HEK293T (cell line): ENCODE measurements at regions of chr7 and their contacts with region 1.

Region 1: GRCh38 chr7:66844552-66845378 is 76.3 kb upstream of the TMEM248 start:
- DNase-seq: peak; percentile 99

Region 2: GRCh38 chr7:66810716-66811115 is 34.0 kb before region 1 on chr7:
- CTCF ChIA-PET with region 1: no interaction called
- POLR2A ChIA-PET with region 1: interaction called, 11 read pairs
- DNase-seq: no peak

Region 3: DNA sequence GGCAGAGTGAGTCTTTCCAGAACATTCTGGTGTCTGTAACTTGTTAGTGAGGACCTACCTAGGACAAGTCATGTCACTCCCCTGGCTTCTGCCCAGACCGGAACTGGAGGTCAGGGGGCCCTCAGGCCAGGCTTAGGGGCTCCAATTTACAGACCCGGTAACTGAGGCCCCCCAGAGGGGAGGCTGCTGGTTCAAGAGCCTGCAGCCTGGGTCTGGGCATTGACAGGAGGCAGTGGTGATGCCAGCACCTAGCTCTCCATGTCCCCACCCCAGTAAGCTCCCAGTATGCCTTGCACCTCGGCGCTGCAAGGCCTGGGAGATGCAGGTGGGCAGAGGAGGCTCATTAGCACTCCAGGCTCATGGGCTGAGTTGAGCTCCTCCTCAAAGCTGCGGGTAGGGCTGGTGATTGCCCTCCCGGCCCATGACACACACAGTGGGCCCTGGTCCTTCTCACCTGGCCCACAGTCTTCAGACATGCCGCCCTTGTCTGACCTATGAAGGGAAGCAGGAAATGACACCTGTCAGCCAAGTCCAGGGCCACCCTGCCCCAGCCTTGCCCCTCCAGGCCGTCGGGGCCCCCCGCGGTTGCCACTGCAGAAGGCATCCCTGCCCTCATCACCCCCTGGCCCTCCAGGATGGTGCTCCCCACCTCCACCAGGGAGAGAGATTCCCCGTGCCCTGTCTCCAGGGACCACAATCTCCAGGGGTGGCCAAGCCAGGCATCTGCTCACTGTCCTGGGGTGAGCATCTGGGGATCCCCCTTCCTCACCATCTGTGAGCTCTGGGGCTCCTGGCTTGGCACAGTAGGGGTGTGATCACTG is 12.0 kb before region 1 on chr7:
- CTCF ChIA-PET with region 1: no interaction called
- POLR2A ChIA-PET with region 1: interaction called, 10 read pairs
- DNase-seq: no peak